Posterior vena cava (tissue), 2 donors: ENCODE measurements at regions of chr1 and their contacts with region 1.

Region 1: GRCh38 chr1:7646981-7647901 is 123.9 kb upstream of the VAMP3 start:
- DNase-seq: peak; percentile 91

Region 2: DNA sequence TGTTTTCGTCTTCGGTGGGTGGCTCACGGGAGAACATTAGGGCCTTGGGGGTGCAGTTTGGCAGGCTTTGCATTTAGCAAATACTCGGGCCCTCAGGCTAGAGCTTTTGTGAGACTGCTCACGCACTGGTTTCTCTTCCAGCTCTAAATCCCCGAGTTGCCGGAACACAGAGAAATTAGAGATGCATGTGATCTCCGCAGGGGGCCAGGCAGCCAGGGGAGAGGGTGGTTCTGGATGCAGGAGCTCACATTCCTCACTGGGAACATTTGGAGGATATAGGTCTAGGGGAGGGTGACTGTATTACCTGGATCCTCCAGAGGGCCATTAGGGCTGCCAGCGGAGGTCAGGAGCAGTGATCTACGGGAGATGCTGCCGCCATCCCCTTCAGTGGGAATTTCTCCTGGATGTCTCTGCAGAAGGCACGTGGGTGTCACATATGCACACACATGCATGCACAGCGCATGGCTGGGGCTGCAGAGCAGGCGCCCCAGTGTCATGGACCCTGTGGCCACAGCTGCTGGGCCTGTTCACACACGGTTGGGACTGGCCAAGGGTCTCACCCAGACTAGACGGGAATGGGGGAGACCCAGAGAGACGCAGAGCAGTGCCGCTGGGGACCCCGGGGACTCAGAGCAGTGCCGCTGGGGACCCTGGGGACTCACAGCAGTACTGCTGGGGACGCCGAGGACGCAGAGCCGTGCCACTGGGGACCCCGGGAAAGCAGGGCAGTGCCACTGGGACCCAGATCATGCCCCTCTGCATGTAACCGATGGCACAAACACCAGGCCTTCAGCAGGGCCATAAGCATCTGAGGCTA is 603.3 kb before region 1 on chr1:
- intact Hi-C with region 1: loop called in 1 of 2 experiments (anchors 2 kb)
- DNase-seq: no peak

Region 3: DNA sequence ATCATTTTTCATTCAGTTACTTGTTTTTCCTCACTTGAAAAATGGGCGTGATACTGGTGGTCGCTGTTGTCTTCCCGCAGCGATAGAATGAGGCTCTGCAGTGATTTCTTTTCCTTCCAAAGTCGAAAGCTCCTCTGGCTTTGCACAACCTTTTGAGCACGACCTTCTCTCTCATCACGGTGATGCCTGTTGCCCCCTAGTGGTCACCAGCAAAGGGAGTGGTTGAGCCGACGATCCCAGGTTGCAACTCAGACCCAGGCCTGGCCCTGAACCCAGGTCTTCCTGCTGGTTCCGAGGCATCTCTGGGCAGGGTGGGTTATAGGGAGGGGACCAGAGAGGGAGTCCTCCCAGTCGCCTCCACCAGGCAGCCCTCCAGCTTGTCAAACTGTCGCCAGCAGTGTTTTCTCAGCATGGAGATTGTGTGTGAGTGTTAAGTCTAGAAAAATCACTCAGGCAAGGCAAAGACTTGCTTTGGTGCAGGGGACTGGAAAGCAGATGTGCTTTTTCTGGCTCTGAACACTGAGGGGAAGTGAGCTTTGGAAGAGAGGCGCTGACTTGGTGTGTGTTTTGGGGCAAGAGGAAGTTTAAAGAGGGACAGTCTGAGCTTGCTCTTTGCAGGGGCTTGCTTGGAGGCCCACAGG is 576.7 kb before region 1 on chr1:
- intact Hi-C with region 1: loop called in 1 of 2 experiments (anchors 10 kb)
- DNase-seq: peak; percentile 88

Region 4: GRCh38 chr1:7454895-7455784 is 192.1 kb before region 1 on chr1:
- intact Hi-C with region 1: loop called in 1 of 2 experiments (anchors 5 kb)
- DNase-seq: no peak

Region 5: GRCh38 chr1:7478809-7479499 is 168.3 kb before region 1 on chr1:
- intact Hi-C with region 1: no loop called
- DNase-seq: no peak